ENCODE measurements at regions of chr11 and their contacts with region 1.

Region 1: GRCh38 chr11:95964281-95964680 is 40.4 kb upstream of the MTMR2 start:
- DNase-seq: no peak
- ATAC-seq: no peak
- H3K4me3 ChIP-seq: no peak overlapping the region
- H3K27ac ChIP-seq: no peak overlapping the region
- H3K4me1 ChIP-seq: no peaks in the 10 kb centered on the region
- H3K27me3 ChIP-seq: no peaks in the 10 kb centered on the region
- CTCF ChIP-seq: no peak

Region 2: GRCh38 chr11:95917193-95918036 is 46.9 kb before region 1 on chr11:
- intact Hi-C with region 1: no loop called
- DNase-seq: peak in 1 of 2 donors; percentile 20
- ATAC-seq: peak in 6 of 8 donors; percentile 34 to 82 (median 70)
- H3K4me3 ChIP-seq: no peak overlapping the region
- H3K27ac ChIP-seq: peak overlapping the region in 9 of 10 donors; percentile 17 to 71 (median 45)
- H3K4me1 ChIP-seq: peaks cover 0 to 76% (median 56%) of the 10 kb centered on the region in 9 donors
- H3K27me3 ChIP-seq: no peaks in the 10 kb centered on the region
- CTCF ChIP-seq: no peak

Region 3: DNA sequence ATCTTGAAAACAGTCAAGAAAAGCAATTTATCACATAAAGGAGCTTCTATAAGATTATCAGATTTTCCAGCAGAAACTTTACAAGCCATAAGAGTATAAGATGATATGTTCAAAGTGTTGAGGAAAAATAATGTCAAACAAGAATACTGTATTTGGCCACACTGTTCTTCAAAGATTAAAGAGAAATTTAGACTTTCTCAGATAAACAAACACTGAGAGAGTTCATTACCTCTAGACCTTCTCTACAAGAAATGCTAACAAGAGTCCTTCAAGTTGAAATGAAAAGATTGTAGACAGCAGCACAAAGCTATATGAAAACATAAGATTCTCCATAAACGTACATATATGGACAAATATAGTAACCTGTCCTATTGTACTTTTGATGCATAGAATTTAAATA is 32.4 kb before region 1 on chr11:
- intact Hi-C with region 1: loop called in 1 of 10 experiments (anchors 2 kb)
- DNase-seq: no peak
- ATAC-seq: no peak
- H3K4me3 ChIP-seq: no peak overlapping the region
- H3K27ac ChIP-seq: no peak overlapping the region
- H3K4me1 ChIP-seq: peaks cover 0 to 2% (median 0%) of the 10 kb centered on the region in 9 donors
- H3K27me3 ChIP-seq: no peaks in the 10 kb centered on the region
- CTCF ChIP-seq: no peak